ENCODE measurements at regions of chr6 and their contacts with region 1.

Region 1: DNA sequence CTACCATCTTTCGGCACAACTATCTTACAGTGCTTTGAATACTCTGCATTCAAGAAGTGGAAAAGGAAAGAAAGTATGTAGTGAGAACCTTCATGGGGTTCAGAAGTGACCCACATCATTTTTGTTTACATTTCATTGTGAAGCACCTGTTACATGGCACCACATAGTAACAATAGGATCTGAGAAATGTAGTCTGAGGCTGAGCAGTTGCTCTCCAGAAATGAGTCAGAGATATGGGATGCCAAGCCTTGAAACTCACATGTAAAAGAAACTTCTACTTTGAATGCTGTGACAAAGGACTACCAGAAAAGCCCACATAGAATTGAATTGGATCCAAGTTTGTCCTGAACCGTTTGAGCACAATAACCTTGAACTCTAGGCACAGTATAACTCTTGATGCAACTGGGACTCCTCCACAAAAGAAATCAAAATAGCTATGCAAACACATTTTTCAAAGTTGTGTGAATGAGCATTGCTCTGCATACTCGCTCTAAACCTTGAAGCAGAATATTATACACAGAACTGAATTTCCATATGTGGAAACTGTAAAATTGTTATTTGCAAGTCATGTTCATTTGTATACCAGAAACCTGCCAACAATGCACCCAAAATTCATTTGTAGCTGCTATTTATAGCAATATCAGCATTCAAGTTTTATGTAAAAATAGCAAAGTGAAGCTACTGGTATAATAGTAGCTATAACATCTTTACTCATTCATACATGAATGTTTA is 400.9 kb upstream of the POU3F2 start:
- DNase-seq: no peak
- CTCF ChIP-seq: no peak

Region 2: GRCh38 chr6:98443633-98444032 is 10.1 kb after region 1 on chr6:
- CTCF ChIA-PET with region 1: interaction called, 14 read pairs
- POLR2A ChIA-PET with region 1: no interaction called
- DNase-seq: no peak
- CTCF ChIP-seq: no peak

Region 3: DNA sequence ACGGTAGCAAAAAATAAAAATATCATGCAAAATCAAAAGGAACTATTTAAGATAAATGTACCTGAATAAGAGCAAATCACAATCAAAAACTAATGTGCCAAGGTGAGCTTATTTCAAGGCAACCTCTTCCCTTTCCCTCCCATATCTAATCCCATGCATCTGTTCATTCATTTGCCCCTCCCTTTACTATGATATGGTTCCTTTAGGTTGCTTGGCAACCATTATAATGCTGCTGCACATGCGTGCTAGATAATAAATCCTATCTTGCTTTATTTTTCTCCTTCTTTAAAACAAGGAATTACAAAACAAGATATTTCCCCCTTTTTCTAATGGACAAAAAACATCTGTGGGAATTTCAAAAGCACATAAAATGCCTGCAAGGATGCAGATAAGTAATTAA is 82.7 kb after region 1 on chr6:
- CTCF ChIA-PET with region 1: no interaction called
- POLR2A ChIA-PET with region 1: no interaction called
- DNase-seq: no peak
- CTCF ChIP-seq: no peak

Measured in GM10248 (cell line).